GM12878 (cell line): ENCODE measurements at regions of chr7 and their contacts with region 1.

Region 1: DNA sequence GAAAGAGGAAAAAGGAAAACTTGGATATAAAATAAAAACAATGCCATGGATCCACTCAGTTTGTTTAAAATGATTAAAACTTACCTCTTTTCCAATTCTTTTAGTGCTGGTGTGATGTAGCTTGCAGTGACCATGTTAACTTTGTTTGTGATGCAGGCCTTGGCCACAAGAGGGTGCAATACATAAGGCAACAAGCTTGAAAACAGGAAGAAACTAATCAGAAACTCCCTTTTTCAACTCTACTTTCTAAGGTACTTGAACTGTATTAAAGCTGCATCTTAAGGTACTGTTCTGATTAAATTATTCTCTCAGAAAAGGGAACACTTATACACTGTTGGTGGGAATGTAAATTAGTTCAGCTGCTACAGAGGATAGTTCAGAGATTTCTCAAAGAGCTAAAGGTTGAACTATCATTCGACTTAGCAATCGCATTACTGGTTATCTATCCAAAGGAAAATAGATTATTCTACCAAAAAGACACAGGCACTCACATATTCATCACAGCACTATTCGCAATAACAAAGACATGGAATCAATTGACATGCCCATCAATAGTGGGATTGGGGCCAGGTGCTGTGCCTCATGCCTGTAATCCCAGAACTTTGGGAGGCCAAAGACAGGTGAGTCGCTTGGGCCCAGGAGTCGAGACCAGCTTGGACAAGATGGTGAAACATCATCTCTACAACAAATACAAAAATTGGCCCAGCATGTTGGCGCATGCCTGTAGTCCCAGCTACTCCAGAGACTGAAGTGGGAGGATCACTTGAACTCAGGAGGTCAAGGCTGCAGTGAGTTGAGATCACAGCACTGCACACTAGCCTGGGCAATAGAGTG is 50.9 kb downstream of the AASS start:
- DNase-seq: peak; percentile 37
- ATAC-seq: peak; percentile 97
- H3K4me3 ChIP-seq: no peak overlapping the region
- H3K27ac ChIP-seq: no peak overlapping the region
- H3K4me1 ChIP-seq: no peaks in the 10 kb centered on the region
- H3K27me3 ChIP-seq: no peaks in the 10 kb centered on the region
- CTCF ChIP-seq: peak; percentile 83 to 93 (median 91)
- EP300 ChIP-seq: no peak
- POLR2A ChIP-seq: no peak
- RAD21 ChIP-seq: peak; percentile 73

Region 2: DNA sequence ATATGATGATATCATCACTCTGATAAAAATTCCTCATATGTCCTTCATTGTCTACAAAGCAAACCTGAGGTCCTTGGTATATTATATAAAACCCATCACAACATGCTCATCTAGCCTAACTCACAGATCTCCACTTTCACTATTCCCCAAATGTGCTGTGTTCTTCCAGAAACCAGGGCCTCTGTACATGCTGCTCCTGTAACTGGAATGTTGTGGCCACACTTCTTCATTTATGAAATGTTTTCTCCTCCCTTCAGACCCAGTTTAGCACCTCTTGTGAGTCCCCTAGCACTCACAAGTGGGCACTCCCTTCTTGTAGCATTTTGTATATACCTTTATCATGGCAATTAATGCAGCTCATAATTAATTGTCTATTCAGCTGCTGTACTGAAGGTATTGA is 11.0 kb before region 1 on chr7:
- CTCF ChIA-PET with region 1: interaction called, 13 read pairs
- POLR2A ChIA-PET with region 1: no interaction called
- RAD21 ChIA-PET with region 1: no interaction called
- SMC1A ChIA-PET with region 1: interaction called, 4 read pairs
- in situ Hi-C with region 1: no loop called
- intact Hi-C with region 1: no loop called
- DNase-seq: no peak
- ATAC-seq: no peak
- H3K4me3 ChIP-seq: no peak overlapping the region
- H3K27ac ChIP-seq: no peak overlapping the region
- H3K4me1 ChIP-seq: no peaks in the 10 kb centered on the region
- H3K27me3 ChIP-seq: no peaks in the 10 kb centered on the region
- CTCF ChIP-seq: no peak
- EP300 ChIP-seq: no peak
- POLR2A ChIP-seq: no peak
- RAD21 ChIP-seq: no peak

Region 3: GRCh38 chr7:122219253-122219865 is 126.2 kb after region 1 on chr7:
- CTCF ChIA-PET with region 1: interaction called, 9 read pairs
- POLR2A ChIA-PET with region 1: no interaction called
- RAD21 ChIA-PET with region 1: no interaction called
- SMC1A ChIA-PET with region 1: no interaction called
- in situ Hi-C with region 1: no loop called
- intact Hi-C with region 1: loop called (anchors 5 kb)
- DNase-seq: no peak
- ATAC-seq: no peak
- H3K4me3 ChIP-seq: no peak overlapping the region
- H3K27ac ChIP-seq: no peak overlapping the region
- H3K4me1 ChIP-seq: no peaks in the 10 kb centered on the region
- H3K27me3 ChIP-seq: no peaks in the 10 kb centered on the region
- CTCF ChIP-seq: peak; percentile 51 to 67 (median 55); a peak in 5 of 6 replicates
- EP300 ChIP-seq: no peak
- POLR2A ChIP-seq: no peak
- RAD21 ChIP-seq: peak; percentile 71